ENCODE measurements at regions of chr11 and their contacts with region 1.

Region 1: GRCh38 chr11:21268036-21268435 is 598.6 kb downstream of the NELL1 start:
- DNase-seq: no peak
- ATAC-seq: no peak
- H3K4me3 ChIP-seq: no peak overlapping the region
- H3K27ac ChIP-seq: no peak overlapping the region
- H3K4me1 ChIP-seq: no peaks in the 10 kb centered on the region
- H3K27me3 ChIP-seq: no peaks in the 10 kb centered on the region
- CTCF ChIP-seq: no peak
- POLR2A ChIP-seq: no peak
- RAD21 ChIP-seq: no peak

Region 2: GRCh38 chr11:21195995-21196394 is 72.0 kb before region 1 on chr11:
- CTCF ChIA-PET with region 1: no interaction called
- POLR2A ChIA-PET with region 1: no interaction called
- dilution Hi-C with region 1: no loop called
- in situ Hi-C with region 1: no loop called
- intact Hi-C with region 1: no loop called
- DNase-seq: no peak
- ATAC-seq: no peak
- H3K4me3 ChIP-seq: no peak overlapping the region
- H3K27ac ChIP-seq: no peak overlapping the region
- H3K4me1 ChIP-seq: no peaks in the 10 kb centered on the region
- H3K27me3 ChIP-seq: no peaks in the 10 kb centered on the region
- CTCF ChIP-seq: no peak
- POLR2A ChIP-seq: no peak
- RAD21 ChIP-seq: no peak

Region 3: DNA sequence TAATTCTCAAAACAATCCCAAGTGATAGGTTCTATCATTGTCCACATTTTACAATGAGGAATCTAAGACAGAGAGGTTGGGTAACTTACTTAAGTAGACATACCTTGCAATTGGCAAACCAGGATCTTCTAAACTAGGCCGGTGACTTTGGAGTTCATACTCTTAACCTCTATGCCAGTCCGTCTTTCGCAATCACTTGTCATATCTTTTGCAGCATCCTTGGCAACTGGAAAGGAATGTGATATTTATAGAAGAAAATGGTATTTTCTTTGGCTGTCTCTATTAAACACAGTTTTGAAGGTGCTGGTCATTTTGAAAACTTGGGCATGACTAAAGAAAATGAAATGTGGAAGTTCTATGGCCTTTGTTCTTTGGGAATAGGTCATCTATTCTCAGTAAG is 42.2 kb before region 1 on chr11:
- CTCF ChIA-PET with region 1: no interaction called
- POLR2A ChIA-PET with region 1: no interaction called
- dilution Hi-C with region 1: no loop called
- in situ Hi-C with region 1: no loop called
- intact Hi-C with region 1: no loop called
- DNase-seq: no peak
- ATAC-seq: no peak
- H3K4me3 ChIP-seq: no peak overlapping the region
- H3K27ac ChIP-seq: no peak overlapping the region
- H3K4me1 ChIP-seq: no peaks in the 10 kb centered on the region
- H3K27me3 ChIP-seq: no peaks in the 10 kb centered on the region
- CTCF ChIP-seq: no peak
- POLR2A ChIP-seq: no peak
- RAD21 ChIP-seq: no peak

Region 4: GRCh38 chr11:21446939-21447590 is 179.0 kb after region 1 on chr11:
- CTCF ChIA-PET with region 1: no interaction called
- POLR2A ChIA-PET with region 1: no interaction called
- dilution Hi-C with region 1: no loop called
- in situ Hi-C with region 1: no loop called
- intact Hi-C with region 1: loop called (anchors 5 kb)
- DNase-seq: no peak
- ATAC-seq: no peak
- H3K4me3 ChIP-seq: no peak overlapping the region
- H3K27ac ChIP-seq: no peak overlapping the region
- H3K4me1 ChIP-seq: no peaks in the 10 kb centered on the region
- H3K27me3 ChIP-seq: no peaks in the 10 kb centered on the region
- CTCF ChIP-seq: no peak
- POLR2A ChIP-seq: no peak
- RAD21 ChIP-seq: no peak